K562 (cell line): ENCODE measurements at regions of chr3 and their contacts with region 1.

Region 1: GRCh38 chr3:172106989-172107388 is 67.6 kb downstream of the FNDC3B start:
- DNase-seq: peak in 3 of 4 experiments; percentile 24 to 84 (median 72)
- ATAC-seq: peak; percentile 81
- H3K4me3 ChIP-seq: no peak overlapping the region
- H3K27ac ChIP-seq: peak overlapping the region; percentile 47; the same call in 2 of the 3 replicates
- H3K4me1 ChIP-seq: peaks cover 8 to 41% of the 10 kb centered on the region in 2 experiments
- H3K27me3 ChIP-seq: no peaks in the 10 kb centered on the region
- CTCF ChIP-seq: no peak
- EP300 ChIP-seq: peak; percentile 44; the same call in 1 of the 2 replicates
- POLR2A ChIP-seq: no peak
- RAD21 ChIP-seq: no peak

Region 2: DNA sequence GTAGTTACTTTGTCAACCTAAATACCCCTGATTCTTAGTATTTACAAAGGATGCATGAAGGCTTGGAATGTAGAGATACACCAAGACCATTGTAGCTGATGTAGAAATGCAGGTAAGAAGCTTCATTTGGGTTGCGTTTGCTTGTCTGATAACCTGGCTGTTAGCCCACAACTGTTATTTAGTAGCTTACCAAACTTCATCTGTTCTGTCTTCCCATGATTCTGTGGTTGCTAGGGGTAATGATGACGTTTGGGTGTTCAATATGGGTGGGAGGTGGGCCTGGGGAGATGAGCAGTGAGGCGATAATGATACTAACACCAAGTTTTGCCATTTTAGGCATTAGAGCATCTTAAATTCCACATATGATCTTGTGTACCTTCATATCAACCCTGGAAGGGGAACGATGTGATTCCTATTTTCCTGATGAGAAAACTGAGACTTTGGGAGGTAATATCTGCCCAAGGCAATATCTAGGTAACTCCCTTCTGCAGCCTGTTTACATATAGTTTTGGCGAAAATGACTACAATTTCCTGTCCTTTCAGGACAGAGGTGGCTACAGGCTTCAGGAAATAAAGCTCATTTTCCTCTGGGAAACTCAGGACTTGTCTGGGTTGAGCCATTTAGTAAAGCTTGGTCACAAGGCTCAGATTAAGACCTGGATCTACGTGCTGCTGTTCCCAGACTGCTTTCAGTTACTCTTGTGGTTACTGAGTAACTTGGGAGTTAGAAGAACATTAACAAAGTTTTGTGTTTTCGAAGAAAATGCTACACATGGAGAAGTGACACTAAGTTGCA is 40.8 kb before region 1 on chr3:
- CTCF ChIA-PET with region 1: no interaction called
- POLR2A ChIA-PET with region 1: no interaction called
- in situ Hi-C with region 1: no loop called
- intact Hi-C with region 1: loop called (anchors 5 kb)
- DNase-seq: no peak
- ATAC-seq: peak; percentile 33
- H3K4me3 ChIP-seq: no peak overlapping the region
- H3K27ac ChIP-seq: peak overlapping the region; percentile 92
- H3K4me1 ChIP-seq: peaks cover 11 to 57% of the 10 kb centered on the region in 2 experiments
- H3K27me3 ChIP-seq: no peaks in the 10 kb centered on the region
- CTCF ChIP-seq: no peak
- EP300 ChIP-seq: no peak
- POLR2A ChIP-seq: no peak
- RAD21 ChIP-seq: 0 out of 4 replicates have a peak, but pooled peaks of 1 of the 2 experiments have one; percentile 1